ENCODE measurements at regions of chr1 and their contacts with region 1.

Region 1: DNA sequence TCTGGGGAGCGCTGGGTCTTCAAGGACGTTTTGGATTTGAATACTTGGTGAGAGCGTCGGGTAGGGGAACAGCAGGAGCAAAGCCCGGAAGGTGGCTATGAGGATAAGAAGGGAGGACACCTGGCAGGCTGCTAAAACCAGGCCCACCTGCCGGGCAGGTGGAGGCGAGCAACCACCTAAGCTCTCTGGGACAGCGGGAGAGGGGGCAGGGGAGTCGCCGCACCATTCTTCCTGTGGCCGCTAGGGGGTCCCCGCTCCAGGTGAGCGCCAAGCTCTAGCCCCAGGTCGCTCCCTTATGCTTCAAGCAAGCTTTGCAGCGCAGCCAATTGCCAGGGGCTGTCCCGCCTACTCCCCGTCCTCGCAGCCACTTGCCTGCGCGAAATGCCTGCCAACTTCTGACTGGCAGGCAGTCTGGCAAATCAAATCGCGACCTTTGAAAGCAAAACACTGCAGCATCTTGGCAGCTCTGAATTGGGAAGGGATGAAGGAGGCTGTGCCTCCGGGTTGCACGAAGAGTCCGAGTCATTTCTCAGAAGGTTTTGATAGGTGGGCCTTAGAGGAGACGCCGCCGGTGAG is at the start of gene NIPAL3:
- DNase-seq: peak; percentile 81 to 99 (median 97)
- ATAC-seq: peak; percentile 98
- H3K4me3 ChIP-seq: peak within 1 kb of the TSS; percentile 76
- H3K4me3 Mint-ChIP-seq: peak within 1 kb of the TSS; percentile 95 to 100 (median 98)
- H3K27ac ChIP-seq: peak within 1 kb of the TSS; percentile 74
- H3K27ac Mint-ChIP-seq: peak within 1 kb of the TSS; percentile 75 to 99 (median 90)
- H3K4me1 ChIP-seq: peaks cover 23 to 44% of the 10 kb centered on the region in 2 donors
- H3K4me1 Mint-ChIP-seq: peaks cover 51 to 91% (median 75%) of the 10 kb centered on the region in 7 donors
- H3K27me3 ChIP-seq: no peaks in the 10 kb centered on the region
- H3K27me3 Mint-ChIP-seq: no peaks in the 10 kb centered on the region
- total RNA-seq, gene NIPAL3: 35.5 to 65.0 (median 54.5) TPM

Region 2: DNA sequence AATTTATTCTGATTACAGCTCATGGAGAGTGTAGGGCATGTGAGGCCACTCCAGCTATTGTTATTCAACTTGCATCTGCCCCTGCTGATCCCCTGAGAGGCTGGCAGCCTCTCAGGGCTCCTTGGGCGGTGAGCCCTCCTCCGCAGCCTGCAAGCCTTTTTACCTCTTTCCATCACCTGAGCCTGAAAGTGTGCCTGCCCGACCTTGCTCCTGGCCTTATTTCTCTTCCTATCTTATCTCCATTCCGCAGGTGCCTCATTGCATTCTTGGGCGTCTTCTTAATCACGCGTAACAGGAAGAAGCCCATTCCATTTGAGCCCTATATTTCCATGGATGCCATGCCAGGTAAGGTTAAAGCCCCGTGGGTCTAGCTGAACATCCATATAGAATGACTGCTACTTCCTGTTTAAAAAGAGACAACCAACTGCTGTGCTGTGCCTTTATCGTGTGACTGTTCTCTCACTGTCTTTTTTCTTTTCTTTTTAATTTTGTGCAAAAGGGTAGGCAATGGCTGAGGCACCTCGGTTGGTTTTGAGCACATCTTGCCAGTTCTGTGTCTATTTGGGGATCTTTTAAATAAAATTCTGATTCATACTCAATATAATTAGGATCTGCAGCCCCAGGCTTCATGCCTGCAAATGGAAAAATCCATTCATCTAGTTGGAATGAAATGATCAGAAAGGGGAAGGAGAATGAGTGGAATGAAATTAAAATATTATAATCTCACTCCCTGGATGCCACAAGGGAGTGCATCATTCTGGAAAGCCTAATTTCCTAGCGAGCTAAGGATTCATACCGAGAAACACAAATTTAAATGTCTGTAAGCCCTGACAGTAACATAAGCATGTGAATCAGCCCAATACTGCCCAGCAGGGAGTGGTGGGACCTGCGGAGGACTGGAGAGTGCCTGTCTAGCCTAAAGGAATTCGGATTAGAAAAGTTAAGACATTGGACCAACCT is 48.6 kb after region 1 on chr1:
- CTCF ChIA-PET with region 1: interaction called, 8 read pairs
- POLR2A ChIA-PET with region 1: interaction called, 3 read pairs
- intact Hi-C with region 1: loop called in 1 of 2 experiments (anchors 5 kb)
- DNase-seq: peak in 6 of 9 donors; percentile 12 to 37 (median 31)
- ATAC-seq: no peak
- H3K4me3 ChIP-seq: no peak overlapping the region
- H3K4me3 Mint-ChIP-seq: peak overlapping the region in 8 of 10 donors; percentile 63 to 75 (median 68)
- H3K27ac ChIP-seq: peak overlapping the region; percentile 45
- H3K27ac Mint-ChIP-seq: peak overlapping the region; percentile 58 to 95 (median 86)
- H3K4me1 ChIP-seq: peaks cover 0 to 15% of the 10 kb centered on the region in 2 donors
- H3K4me1 Mint-ChIP-seq: peaks cover 21 to 65% (median 50%) of the 10 kb centered on the region in 7 donors
- H3K27me3 ChIP-seq: no peaks in the 10 kb centered on the region
- H3K27me3 Mint-ChIP-seq: no peaks in the 10 kb centered on the region

Region 3: DNA sequence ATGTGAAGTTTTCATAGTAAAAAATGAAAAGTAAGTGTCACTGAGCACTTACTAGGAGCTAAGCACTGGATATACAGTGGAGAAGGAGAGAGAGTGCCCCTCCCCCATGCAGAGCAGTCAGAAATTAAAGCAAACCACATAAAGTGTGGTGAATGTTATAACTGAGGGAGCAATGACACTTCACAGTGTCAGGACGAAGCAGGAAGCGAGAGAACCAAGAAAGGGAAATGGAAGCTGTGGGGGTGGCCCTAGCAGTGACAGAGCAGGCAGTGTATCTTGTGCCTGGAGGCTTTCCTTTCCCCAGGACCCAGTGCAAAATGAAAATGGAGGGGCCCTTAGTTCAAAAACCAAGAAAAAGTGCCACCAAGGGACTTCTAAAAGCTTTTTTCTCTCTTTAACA is 65.7 kb after region 1 on chr1:
- CTCF ChIA-PET with region 1: interaction called, 26 read pairs
- POLR2A ChIA-PET with region 1: interaction called, 44 read pairs
- intact Hi-C with region 1: loop called (anchors 1 to 2 kb)
- DNase-seq: peak in 8 of 9 donors; percentile 50 to 80 (median 75)
- ATAC-seq: peak; percentile 84
- H3K4me3 ChIP-seq: peak overlapping the region; percentile 44
- H3K4me3 Mint-ChIP-seq: peak overlapping the region; percentile 74 to 95 (median 83)
- H3K27ac ChIP-seq: peak overlapping the region; percentile 83
- H3K27ac Mint-ChIP-seq: peak overlapping the region; percentile 93 to 99 (median 98)
- H3K4me1 ChIP-seq: peaks cover 49 to 59% of the 10 kb centered on the region in 2 donors
- H3K4me1 Mint-ChIP-seq: peaks cover 36 to 86% (median 77%) of the 10 kb centered on the region in 7 donors
- H3K27me3 ChIP-seq: no peaks in the 10 kb centered on the region
- H3K27me3 Mint-ChIP-seq: no peaks in the 10 kb centered on the region

Region 4: GRCh38 chr1:24486331-24487065 is 71.1 kb after region 1 on chr1:
- CTCF ChIA-PET with region 1: interaction called, 26 read pairs
- POLR2A ChIA-PET with region 1: interaction called, 44 read pairs
- intact Hi-C with region 1: loop called (anchors 1 to 2 kb)
- DNase-seq: peak in 7 of 9 donors; percentile 69 to 82 (median 77)
- ATAC-seq: peak; percentile 69
- H3K4me3 ChIP-seq: peak overlapping the region; percentile 11
- H3K4me3 Mint-ChIP-seq: peak overlapping the region; percentile 70 to 86 (median 78)
- H3K27ac ChIP-seq: peak overlapping the region; percentile 76
- H3K27ac Mint-ChIP-seq: peak overlapping the region; percentile 93 to 99 (median 97)
- H3K4me1 ChIP-seq: peaks cover 52 to 81% of the 10 kb centered on the region in 2 donors
- H3K4me1 Mint-ChIP-seq: peaks cover 47 to 90% (median 76%) of the 10 kb centered on the region in 7 donors
- H3K27me3 ChIP-seq: no peaks in the 10 kb centered on the region
- H3K27me3 Mint-ChIP-seq: no peaks in the 10 kb centered on the region

Region 5: GRCh38 chr1:24526940-24527542 is 111.6 kb after region 1 on chr1:
- CTCF ChIA-PET with region 1: interaction called, 43 read pairs
- POLR2A ChIA-PET with region 1: interaction called, 10 read pairs
- intact Hi-C with region 1: loop called (anchors 1 to 2 kb)
- DNase-seq: peak in 8 of 9 donors; percentile 28 to 66 (median 56)
- ATAC-seq: peak; percentile 69
- H3K4me3 ChIP-seq: no peak overlapping the region
- H3K4me3 Mint-ChIP-seq: peak overlapping the region in 7 of 10 donors; percentile 23 to 57 (median 39)
- H3K27ac ChIP-seq: peak overlapping the region; percentile 40
- H3K27ac Mint-ChIP-seq: peak overlapping the region in 8 of 9 donors; percentile 32 to 93 (median 84)
- H3K4me1 ChIP-seq: peaks cover 0 to 49% of the 10 kb centered on the region in 2 donors
- H3K4me1 Mint-ChIP-seq: peaks cover 31 to 86% (median 71%) of the 10 kb centered on the region in 7 donors
- H3K27me3 ChIP-seq: no peaks in the 10 kb centered on the region
- H3K27me3 Mint-ChIP-seq: no peaks in the 10 kb centered on the region

Region 6: DNA sequence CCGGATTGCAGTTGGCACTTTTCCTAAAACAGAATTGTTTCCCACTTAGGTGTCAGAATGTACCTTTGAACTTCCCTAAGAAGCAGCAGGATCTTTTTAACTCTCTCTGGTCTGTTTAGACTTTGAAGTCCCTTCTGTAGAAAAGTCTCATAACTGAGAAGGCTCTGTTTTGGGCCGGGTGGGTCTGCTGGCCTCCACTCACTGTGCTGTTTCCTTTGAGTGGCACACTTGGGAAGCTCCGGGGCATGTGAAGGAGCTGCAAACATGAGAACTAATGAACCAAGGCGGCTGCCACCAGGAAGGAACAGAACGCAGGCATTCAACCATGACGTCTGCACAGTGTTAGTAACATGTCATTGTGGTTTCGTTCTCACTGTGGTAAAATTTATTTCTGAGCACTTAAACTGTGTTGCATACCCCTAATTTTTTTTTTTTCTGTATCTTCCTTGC is 121.0 kb after region 1 on chr1:
- CTCF ChIA-PET with region 1: interaction called, 6 read pairs
- POLR2A ChIA-PET with region 1: interaction called, 12 read pairs
- intact Hi-C with region 1: loop called (anchors 1 to 2 kb)
- DNase-seq: peak; percentile 41 to 92 (median 87)
- ATAC-seq: peak; percentile 90
- H3K4me3 ChIP-seq: no peak overlapping the region
- H3K4me3 Mint-ChIP-seq: peak overlapping the region; percentile 79 to 91 (median 84)
- H3K27ac ChIP-seq: peak overlapping the region; percentile 96
- H3K27ac Mint-ChIP-seq: peak overlapping the region; percentile 93 to 100 (median 99)
- H3K4me1 ChIP-seq: peaks cover 30 to 38% of the 10 kb centered on the region in 2 donors
- H3K4me1 Mint-ChIP-seq: peaks cover 29 to 90% (median 70%) of the 10 kb centered on the region in 7 donors
- H3K27me3 ChIP-seq: no peaks in the 10 kb centered on the region
- H3K27me3 Mint-ChIP-seq: no peaks in the 10 kb centered on the region

Region 7: DNA sequence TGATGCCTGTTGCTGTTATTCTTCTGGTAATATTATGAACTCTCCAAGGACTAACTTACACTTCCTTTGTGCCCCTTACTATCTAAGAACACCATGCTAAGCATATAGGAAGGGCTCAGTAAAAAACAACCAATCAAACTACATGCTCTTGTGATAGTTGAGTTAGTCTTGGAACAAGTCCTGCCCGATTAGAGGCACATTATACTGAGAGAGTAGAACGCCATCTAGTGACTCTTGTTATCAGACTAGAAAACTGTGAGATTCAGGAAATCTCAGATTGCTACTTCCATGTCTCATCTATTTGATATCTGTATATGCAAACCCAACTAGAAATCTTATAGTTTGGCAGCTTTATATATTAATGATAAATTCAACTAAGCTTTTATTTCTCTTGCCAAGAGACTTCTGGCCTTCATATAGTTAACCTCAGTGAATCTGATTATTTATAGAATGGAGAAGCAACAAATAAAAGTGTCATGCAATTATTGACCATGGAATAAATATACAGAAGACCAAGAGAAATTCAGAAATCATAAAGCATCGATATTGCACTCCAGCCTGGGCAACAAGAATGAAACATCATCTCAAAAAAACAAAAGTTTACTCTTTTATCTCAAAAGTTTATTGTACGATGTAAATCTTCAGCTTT is 219.9 kb after region 1 on chr1:
- CTCF ChIA-PET with region 1: interaction called, 4 read pairs
- POLR2A ChIA-PET with region 1: no interaction called
- intact Hi-C with region 1: loop called in 1 of 2 experiments (anchors 1 kb)
- DNase-seq: peak in 7 of 9 donors; percentile 39 to 69 (median 62)
- ATAC-seq: peak; percentile 85
- H3K4me3 ChIP-seq: no peak overlapping the region
- H3K4me3 Mint-ChIP-seq: no peak overlapping the region
- H3K27ac ChIP-seq: no peak overlapping the region
- H3K27ac Mint-ChIP-seq: peak overlapping the region in 5 of 9 donors; percentile 0 to 77 (median 64)
- H3K4me1 ChIP-seq: no peaks in the 10 kb centered on the region
- H3K4me1 Mint-ChIP-seq: peaks cover 2 to 14% (median 8%) of the 10 kb centered on the region in 7 donors
- H3K27me3 ChIP-seq: no peaks in the 10 kb centered on the region
- H3K27me3 Mint-ChIP-seq: peaks cover 4 to 21% (median 8%) of the 10 kb centered on the region in 5 donors